H1 (cell line): ENCODE measurements at regions of chr3 and their contacts with region 1.

Region 1: DNA sequence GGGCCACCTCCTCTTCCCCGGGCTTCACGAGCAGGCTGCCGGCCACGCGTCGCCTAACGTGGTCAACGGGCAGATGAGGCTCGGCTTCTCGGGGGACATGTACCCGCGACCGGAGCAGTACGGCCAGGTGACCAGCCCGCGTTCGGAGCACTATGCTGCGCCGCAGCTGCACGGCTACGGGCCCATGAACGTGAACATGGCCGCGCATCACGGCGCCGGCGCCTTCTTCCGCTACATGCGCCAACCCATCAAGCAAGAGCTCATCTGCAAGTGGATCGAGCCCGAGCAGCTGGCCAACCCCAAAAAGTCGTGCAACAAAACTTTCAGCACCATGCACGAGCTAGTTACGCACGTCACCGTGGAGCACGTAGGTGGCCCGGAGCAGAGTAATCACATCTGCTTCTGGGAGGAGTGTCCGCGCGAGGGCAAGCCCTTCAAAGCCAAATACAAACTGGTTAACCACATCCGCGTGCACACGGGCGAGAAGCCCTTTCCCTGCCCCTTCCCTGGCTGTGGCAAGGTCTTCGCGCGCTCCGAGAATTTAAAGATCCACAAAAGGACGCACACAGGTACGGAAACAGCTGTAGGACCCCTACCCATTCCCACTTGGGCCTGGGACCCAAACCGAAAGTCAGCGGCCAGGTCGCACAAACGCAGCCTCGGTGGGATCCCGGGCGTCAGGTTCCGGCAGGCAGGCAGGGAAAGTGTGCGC is 1.5 kb downstream of the ZIC1 start:
- DNase-seq: peak in 1 of 2 experiments; percentile 71
- H3K4me3 ChIP-seq: peak overlapping the region; percentile 20 to 62 (median 38); a peak in 6 of 8 replicates
- H3K27ac ChIP-seq: no peak overlapping the region
- H3K4me1 ChIP-seq: peaks cover 0 to 41% (median 25%) of the 10 kb centered on the region in 4 experiments; a peak in 6 of 7 replicates
- H3K27me3 ChIP-seq: peaks cover 64 to 98% (median 90%) of the 10 kb centered on the region in 4 experiments
- CTCF ChIP-seq: no peak
- EP300 ChIP-seq: no peak
- POLR2A ChIP-seq: no peak
- RAD21 ChIP-seq: no peak

Region 2: DNA sequence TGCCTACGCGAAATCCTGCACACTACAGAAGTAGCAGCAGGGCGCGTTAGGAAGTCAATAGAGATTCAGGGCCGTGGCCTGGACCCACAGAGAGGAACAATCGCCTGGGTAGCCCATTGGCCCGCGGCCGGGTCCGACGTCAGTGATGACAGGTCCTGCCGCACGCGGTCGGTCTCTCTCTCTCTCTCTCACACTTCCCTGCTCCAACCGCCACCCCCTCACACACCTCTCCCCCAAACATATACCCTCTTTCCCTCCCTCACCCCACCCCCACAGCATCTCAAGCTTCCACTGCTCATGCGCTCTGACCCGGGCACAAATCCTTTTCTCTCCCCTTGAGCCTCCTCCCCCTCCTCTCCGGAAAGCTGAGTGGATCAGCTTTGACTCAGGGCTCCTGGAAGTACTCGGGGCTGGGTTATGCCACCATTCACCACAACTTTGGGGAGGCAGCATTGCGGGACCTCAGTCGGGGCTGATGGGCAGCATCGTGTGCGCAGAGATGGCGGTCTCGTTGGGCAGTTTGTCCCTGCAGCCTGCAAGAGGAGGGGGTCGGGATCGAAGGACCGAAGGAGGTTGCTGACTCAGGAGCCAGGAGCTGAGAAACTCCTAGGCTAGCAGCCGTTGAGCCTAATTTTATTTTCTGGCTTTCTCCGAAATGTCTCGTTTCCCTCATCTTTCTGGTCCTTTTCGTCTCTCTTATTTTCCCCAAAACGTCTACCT is 13.4 kb before region 1 on chr3:
- CTCF ChIA-PET with region 1: interaction called, 485 read pairs
- POLR2A ChIA-PET with region 1: interaction called, 26 read pairs
- DNase-seq: peak in 1 of 2 experiments; percentile 83
- H3K4me3 ChIP-seq: peak overlapping the region; percentile 36 to 68 (median 52)
- H3K27ac ChIP-seq: no peak overlapping the region
- H3K4me1 ChIP-seq: peaks cover 8 to 43% (median 22%) of the 10 kb centered on the region in 4 experiments
- H3K27me3 ChIP-seq: peaks cover 44 to 85% (median 78%) of the 10 kb centered on the region in 4 experiments
- CTCF ChIP-seq: peak in 1 of 3 experiments; percentile 45; a peak in 1 of 4 replicates
- EP300 ChIP-seq: no peak
- POLR2A ChIP-seq: peak in 1 of 2 experiments; percentile 67; a peak in 2 of 3 replicates
- RAD21 ChIP-seq: peak; percentile 4 to 28; a peak in 1 of 4 replicates